Pancreas (tissue), 10 donors: ENCODE measurements at regions of chr11 and their contacts with region 1.

Region 1: DNA sequence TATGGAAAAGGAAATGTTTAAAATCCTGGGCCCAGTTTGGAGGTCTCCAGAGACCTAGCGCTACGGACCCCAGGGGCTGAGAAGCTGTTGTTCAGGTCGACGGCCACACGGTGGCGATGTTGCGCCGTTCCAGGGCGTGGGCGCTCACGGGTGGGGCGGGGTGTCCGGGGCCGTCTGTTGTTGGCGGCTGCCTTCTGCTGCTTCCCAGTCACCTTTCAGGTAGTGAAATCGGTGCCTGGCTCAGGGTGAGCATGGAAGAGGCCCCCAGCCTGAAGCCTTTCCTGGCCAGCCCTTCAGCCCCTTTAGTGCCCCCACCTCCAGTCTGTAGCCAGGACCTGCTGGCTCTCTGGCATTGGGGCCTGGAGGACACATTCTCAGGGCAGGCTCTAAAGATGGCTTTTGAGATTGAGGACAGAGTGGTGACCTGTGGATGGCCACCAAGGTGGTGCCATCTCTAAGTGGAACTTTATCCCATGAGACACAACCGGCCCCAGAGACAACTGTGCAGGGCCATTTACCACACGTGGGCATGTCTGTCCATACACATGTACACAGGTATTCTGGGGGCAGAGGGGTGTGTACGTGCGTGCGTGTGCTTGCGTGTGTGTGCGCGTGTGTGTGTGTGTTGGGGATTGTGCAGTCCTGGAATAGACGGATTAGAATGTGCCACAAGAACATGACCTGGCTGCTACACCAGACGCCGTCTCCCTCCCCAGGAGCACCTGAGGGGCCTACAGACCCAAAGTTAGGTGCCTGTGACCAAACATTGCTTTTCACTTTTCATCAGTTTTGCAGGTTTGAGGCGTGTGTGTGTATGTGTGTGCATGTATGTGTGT is 53.8 kb downstream of the ST14 start:
- DNase-seq: peak in 5 of 6 donors; percentile 45 to 91 (median 70)
- ATAC-seq: peak; percentile 74 to 95 (median 89)
- H3K4me3 ChIP-seq: no peak overlapping the region
- H3K27ac ChIP-seq: no peak overlapping the region
- H3K4me1 ChIP-seq: no peaks in the 10 kb centered on the region
- H3K27me3 ChIP-seq: no peaks in the 10 kb centered on the region
- CTCF ChIP-seq: peak; percentile 88 to 96 (median 93)

Region 2: GRCh38 chr11:130383344-130384211 is 170.2 kb after region 1 on chr11:
- intact Hi-C with region 1: loop called in 1 of 3 experiments (anchors 10 kb)
- DNase-seq: no peak
- ATAC-seq: no peak
- H3K4me3 ChIP-seq: no peak overlapping the region
- H3K27ac ChIP-seq: no peak overlapping the region
- H3K4me1 ChIP-seq: no peaks in the 10 kb centered on the region
- H3K27me3 ChIP-seq: no peaks in the 10 kb centered on the region
- CTCF ChIP-seq: no peak

Region 3: DNA sequence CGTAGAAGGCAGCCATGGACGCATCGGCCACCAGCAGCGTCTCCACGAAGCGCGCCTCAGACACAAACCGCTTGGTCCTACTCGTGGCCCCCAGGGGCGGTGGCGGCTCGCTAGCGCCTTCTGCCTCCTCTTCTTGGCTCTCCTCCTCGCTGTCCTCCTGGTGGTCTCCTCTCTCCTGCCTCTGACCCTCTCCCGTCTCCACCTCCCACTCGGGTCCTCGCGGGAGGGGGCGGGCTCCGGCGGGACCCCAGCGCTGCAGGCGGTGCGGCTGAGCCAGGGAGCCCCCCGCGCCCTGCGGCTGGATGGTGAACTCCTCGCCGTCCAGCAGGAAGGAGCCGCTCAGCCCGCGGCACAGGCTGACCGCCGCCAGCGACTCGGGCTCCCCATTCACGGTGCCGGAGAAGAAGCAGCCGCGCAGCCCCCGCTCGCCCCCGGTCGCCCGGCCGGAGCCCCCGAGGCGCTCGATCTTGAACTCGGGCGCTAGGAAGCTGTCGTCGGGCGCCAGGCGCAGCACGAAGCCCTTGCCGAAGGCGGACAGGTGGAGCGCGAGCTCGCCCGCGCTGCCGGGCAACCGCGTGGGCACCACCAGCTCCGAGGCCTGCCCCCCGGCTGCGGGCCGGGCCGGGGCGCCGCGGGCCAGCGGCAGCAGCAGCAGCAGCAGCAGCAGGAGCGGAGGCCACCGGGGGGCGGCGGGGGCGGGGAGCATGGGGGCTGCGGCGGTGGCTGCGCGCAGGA is 214.4 kb after region 1 on chr11:
- intact Hi-C with region 1: loop called in 1 of 3 experiments (anchors 10 kb)
- DNase-seq: peak in 1 of 6 donors; percentile 71
- ATAC-seq: peak in 3 of 4 donors; percentile 19 to 55 (median 30)
- H3K4me3 ChIP-seq: peak overlapping the region; percentile 3 to 43 (median 14)
- H3K27ac ChIP-seq: no peak overlapping the region
- H3K4me1 ChIP-seq: peaks cover 0 to 5% (median 4%) of the 10 kb centered on the region in 3 donors
- H3K27me3 ChIP-seq: peaks cover 0 to 14% (median 7%) of the 10 kb centered on the region in 4 donors
- CTCF ChIP-seq: no peak